ENCODE measurements at regions of chr9 and their contacts with region 1.

Region 1: DNA sequence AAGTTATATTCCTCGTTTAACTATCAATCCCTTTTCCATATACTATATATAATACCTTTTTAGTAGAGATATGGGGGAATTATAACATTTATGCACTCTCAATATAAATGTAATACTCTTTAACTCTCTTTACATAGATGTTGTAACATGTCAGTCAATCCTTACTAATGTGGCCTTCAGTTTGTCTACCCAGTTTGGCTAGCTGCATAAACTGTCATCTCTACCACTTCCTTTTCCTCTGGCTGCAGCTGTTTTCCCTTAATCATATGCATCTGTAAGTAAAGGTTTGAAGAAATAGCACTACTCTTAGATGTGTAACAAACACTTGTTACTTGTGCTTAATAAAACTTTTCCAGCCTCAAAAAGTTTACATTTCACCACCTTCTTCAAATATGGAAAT is 13.4 kb downstream of the ABHD17B start:
- DNase-seq: peak in 7 of 9 donors; percentile 17 to 53 (median 40)
- ATAC-seq: peak; percentile 80
- H3K4me3 ChIP-seq: no peak overlapping the region
- H3K4me3 Mint-ChIP-seq: peak overlapping the region in 8 of 10 donors; percentile 42 to 68 (median 60)
- H3K27ac ChIP-seq: no peak overlapping the region
- H3K27ac Mint-ChIP-seq: peak overlapping the region in 6 of 9 donors; percentile 15 to 83 (median 70)
- H3K4me1 ChIP-seq: peaks cover 36 to 37% of the 10 kb centered on the region in 2 donors
- H3K4me1 Mint-ChIP-seq: peaks cover 61 to 91% (median 79%) of the 10 kb centered on the region in 7 donors
- H3K27me3 ChIP-seq: no peaks in the 10 kb centered on the region
- H3K27me3 Mint-ChIP-seq: no peaks in the 10 kb centered on the region

Region 2: DNA sequence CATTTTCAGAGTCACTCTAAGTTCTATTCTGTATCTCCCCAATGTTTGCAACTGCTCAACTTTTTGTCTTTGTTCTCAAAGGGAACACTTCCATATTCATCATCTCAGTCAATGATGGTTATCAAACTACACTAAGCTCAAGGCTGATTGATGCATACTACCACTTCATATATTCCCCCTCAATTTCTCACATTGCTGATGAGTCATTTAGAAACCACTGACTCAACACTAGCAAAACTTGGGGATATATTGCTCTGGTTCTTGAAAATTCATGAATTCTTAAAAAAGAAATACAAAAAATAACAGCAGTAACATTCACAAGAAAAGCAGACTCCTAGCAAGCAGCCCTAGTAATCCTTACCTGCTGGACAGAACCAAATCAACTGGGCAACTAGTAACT is 38.8 kb before region 1 on chr9:
- CTCF ChIA-PET with region 1: no interaction called
- POLR2A ChIA-PET with region 1: no interaction called
- intact Hi-C with region 1: loop called in 1 of 2 experiments (anchors 5 kb)
- DNase-seq: no peak
- ATAC-seq: no peak
- H3K4me3 ChIP-seq: no peak overlapping the region
- H3K4me3 Mint-ChIP-seq: peak overlapping the region in 1 of 10 donors; percentile 2
- H3K27ac ChIP-seq: no peak overlapping the region
- H3K27ac Mint-ChIP-seq: peak overlapping the region in 1 of 9 donors; percentile 3
- H3K4me1 ChIP-seq: no peaks in the 10 kb centered on the region
- H3K4me1 Mint-ChIP-seq: peaks cover 0 to 15% (median 0%) of the 10 kb centered on the region in 7 donors
- H3K27me3 ChIP-seq: no peaks in the 10 kb centered on the region
- H3K27me3 Mint-ChIP-seq: no peaks in the 10 kb centered on the region

Region 3: GRCh38 chr9:71885467-71885866 is 12.1 kb before region 1 on chr9:
- CTCF ChIA-PET with region 1: no interaction called
- POLR2A ChIA-PET with region 1: interaction called, 3 read pairs
- intact Hi-C with region 1: loop called in 1 of 2 experiments (anchors 1 kb)
- DNase-seq: no peak
- ATAC-seq: no peak
- H3K4me3 ChIP-seq: no peak overlapping the region
- H3K4me3 Mint-ChIP-seq: peak overlapping the region in 2 of 10 donors; percentile 14 to 24
- H3K27ac ChIP-seq: no peak overlapping the region
- H3K27ac Mint-ChIP-seq: peak overlapping the region in 6 of 9 donors; percentile 29 to 67 (median 44)
- H3K4me1 ChIP-seq: peaks cover 0 to 16% of the 10 kb centered on the region in 2 donors
- H3K4me1 Mint-ChIP-seq: peaks cover 28 to 58% (median 47%) of the 10 kb centered on the region in 7 donors
- H3K27me3 ChIP-seq: no peaks in the 10 kb centered on the region
- H3K27me3 Mint-ChIP-seq: no peaks in the 10 kb centered on the region

Region 4: GRCh38 chr9:71911253-71912074 is 13.9 kb after region 1 on chr9 and contains the start of gene C9orf85:
- CTCF ChIA-PET with region 1: interaction called, 4 read pairs
- POLR2A ChIA-PET with region 1: interaction called, 8 read pairs
- intact Hi-C with region 1: loop called (anchors 1 kb)
- DNase-seq: peak; percentile 84 to 98 (median 95)
- ATAC-seq: peak; percentile 96
- H3K4me3 ChIP-seq: peak within 1 kb of the TSS; percentile 83
- H3K4me3 Mint-ChIP-seq: peak within 1 kb of the TSS; percentile 95 to 100 (median 100)
- H3K27ac ChIP-seq: peak within 1 kb of the TSS; percentile 74
- H3K27ac Mint-ChIP-seq: peak within 1 kb of the TSS; percentile 90 to 99 (median 95)
- H3K4me1 ChIP-seq: peaks cover 15 to 22% of the 10 kb centered on the region in 2 donors
- H3K4me1 Mint-ChIP-seq: peaks cover 47 to 80% (median 67%) of the 10 kb centered on the region in 7 donors
- H3K27me3 ChIP-seq: peaks cover 0 to 3% of the 10 kb centered on the region in 2 donors
- H3K27me3 Mint-ChIP-seq: no peaks in the 10 kb centered on the region
- total RNA-seq, gene C9orf85: 4.8 to 10.3 (median 8.6) TPM